Cardiac septum (tissue), 1 donor: ENCODE measurements at regions of chr12 and their contacts with region 1.

Region 1: GRCh38 chr12:93918262-93918661 is 230.1 kb upstream of the PLXNC1 start:
- DNase-seq: no peak

Region 2: GRCh38 chr12:93376436-93377251 is 541.6 kb before region 1 on chr12:
- intact Hi-C with region 1: no loop called
- DNase-seq: peak; percentile 82

Region 3: GRCh38 chr12:93954166-93955112 is 36.2 kb after region 1 on chr12:
- intact Hi-C with region 1: loop called (anchors 5 kb)
- DNase-seq: no peak